Activated CD4-positive, alpha-beta memory T cell treated with anti-CD3 and anti-CD28 coated beads, Interleukin-2, amount 10 ng/mL, durations not matched to agents 7 days and 5 days (primary cell): ENCODE measurements at regions of chr12 and their contacts with region 1.

Region 1: GRCh38 chr12:94101738-94102660 is 46.4 kb upstream of the PLXNC1 start:
- DNase-seq: peak; percentile 91
- H3K4me3 Mint-ChIP-seq: peak overlapping the region; percentile 83
- H3K27ac Mint-ChIP-seq: peak overlapping the region; percentile 80
- H3K4me1 Mint-ChIP-seq: peaks cover 43% of the 10 kb centered on the region
- H3K27me3 Mint-ChIP-seq: peaks cover 12% of the 10 kb centered on the region

Region 2: DNA sequence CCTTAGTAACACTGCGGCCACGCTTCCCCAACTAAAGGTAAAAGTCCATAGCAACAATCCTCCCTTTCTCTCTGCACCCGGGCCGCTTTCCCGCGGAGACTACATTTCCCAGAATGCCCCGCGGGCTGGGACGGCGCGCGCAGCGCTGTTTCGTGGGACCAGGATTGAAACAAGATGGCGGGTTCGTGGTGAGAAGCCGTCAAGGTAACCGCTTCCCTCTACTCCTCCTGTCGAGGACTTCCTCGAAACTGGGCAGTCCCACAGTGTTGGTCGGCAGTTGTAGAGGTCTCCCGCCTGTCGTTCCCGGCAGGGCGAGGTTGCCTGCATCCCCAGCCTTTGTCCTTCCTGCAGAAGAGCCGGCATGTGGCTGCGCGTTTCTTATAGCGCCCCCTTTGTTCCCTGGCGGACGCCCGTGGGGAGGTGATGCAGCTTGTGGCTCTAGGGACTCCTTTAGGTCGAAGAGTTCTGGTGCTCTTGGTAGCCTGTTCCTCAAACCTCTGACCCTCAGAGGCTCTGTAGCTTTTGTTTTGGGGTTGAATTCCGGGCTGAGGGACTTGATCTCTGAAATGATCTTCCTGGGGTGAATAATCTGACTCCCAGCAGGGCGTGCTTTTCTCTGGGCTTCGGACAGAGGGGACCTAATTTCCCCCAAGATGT is 634.5 kb before region 1 on chr12 and contains the start of gene MRPL42:
- CTCF ChIA-PET with region 1: interaction called, 10 read pairs
- POLR2A ChIA-PET with region 1: interaction called, 3 read pairs
- DNase-seq: peak; percentile 94
- H3K4me3 Mint-ChIP-seq: peak within 1 kb of the TSS; percentile 94
- H3K27ac Mint-ChIP-seq: peak within 1 kb of the TSS; percentile 88
- H3K4me1 Mint-ChIP-seq: peaks cover 31% of the 10 kb centered on the region
- H3K27me3 Mint-ChIP-seq: no peaks in the 10 kb centered on the region
- total RNA-seq, gene MRPL42: 57.2 to 58.0 TPM

Region 3: GRCh38 chr12:93677195-93678064 is 424.6 kb before region 1 on chr12 and contains the start of gene CRADD:
- CTCF ChIA-PET with region 1: interaction called, 18 read pairs
- POLR2A ChIA-PET with region 1: interaction called, 22 read pairs
- DNase-seq: peak; percentile 87
- H3K4me3 Mint-ChIP-seq: peak within 1 kb of the TSS; percentile 88
- H3K27ac Mint-ChIP-seq: peak within 1 kb of the TSS; percentile 99
- H3K4me1 Mint-ChIP-seq: peaks cover 40% of the 10 kb centered on the region
- H3K27me3 Mint-ChIP-seq: peaks cover 6% of the 10 kb centered on the region
- total RNA-seq, gene CRADD: 12.7 to 14.1 TPM

Region 4: DNA sequence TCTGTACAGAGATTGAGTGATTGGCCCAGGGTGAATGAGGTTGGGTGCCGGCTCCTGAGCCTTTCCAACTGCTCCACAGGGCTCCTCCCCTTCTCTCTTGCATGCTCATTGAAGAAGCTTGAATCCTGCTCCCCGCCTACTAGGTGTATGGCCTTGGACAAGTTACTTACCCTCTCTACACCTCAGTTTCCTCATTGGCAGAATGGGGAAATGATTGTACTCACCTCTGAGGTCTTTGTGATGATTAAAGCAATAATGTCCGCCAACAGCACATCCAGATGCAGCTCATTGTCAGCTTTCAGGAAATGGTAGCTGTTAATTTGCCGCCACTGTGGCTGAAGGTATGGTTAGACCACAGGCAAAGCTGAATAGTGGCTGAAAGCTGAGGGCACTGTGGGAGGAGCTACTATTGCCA is 250.7 kb before region 1 on chr12:
- CTCF ChIA-PET with region 1: interaction called, 17 read pairs
- POLR2A ChIA-PET with region 1: no interaction called
- DNase-seq: peak; percentile 85
- H3K4me3 Mint-ChIP-seq: peak overlapping the region; percentile 27
- H3K27ac Mint-ChIP-seq: peak overlapping the region; percentile 86
- H3K4me1 Mint-ChIP-seq: peaks cover 85% of the 10 kb centered on the region
- H3K27me3 Mint-ChIP-seq: no peaks in the 10 kb centered on the region

Region 5: GRCh38 chr12:94012590-94012989 is 89.4 kb before region 1 on chr12:
- CTCF ChIA-PET with region 1: interaction called, 17 read pairs
- POLR2A ChIA-PET with region 1: no interaction called
- DNase-seq: no peak
- H3K4me3 Mint-ChIP-seq: no peak overlapping the region
- H3K27ac Mint-ChIP-seq: no peak overlapping the region
- H3K4me1 Mint-ChIP-seq: peaks cover 17% of the 10 kb centered on the region
- H3K27me3 Mint-ChIP-seq: peaks cover 3% of the 10 kb centered on the region

Region 6: DNA sequence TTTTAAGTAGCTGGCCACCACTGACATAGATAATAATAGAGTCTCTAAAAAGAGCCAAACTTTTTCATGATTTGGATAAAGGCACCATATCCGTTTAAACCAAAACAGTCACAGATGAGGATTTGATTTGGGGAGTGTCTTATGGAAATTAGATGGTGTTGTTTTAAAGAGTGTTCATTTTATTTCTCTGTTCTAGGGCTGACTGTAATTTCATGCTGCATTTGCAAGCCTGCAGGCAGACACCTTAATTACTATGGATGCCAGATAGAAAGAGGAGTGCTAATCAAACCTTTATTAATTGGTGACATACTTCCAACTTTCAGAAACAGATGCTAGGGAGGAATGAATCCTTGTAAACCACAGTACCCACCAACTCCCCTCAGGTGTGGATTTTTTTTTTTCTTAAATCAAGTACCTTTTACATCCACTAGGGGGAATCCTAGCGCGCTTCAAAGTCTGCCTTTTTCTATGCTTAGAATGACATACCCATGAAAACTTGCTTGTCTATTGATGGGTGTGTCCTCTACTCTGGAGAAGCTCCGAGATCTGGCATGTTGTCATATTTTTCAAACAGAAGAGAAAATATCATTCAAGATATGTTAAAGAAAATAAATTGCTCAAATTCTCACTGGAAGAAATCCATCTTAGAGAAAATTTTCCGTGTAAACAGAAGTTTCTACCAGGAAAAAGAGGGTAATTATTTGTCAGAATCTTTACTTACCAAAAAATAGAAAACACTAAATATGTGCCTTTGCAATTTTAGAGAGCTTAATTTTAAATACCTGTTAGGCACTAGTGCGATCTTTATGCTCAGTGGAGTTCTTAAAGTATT is 32.2 kb after region 1 on chr12:
- CTCF ChIA-PET with region 1: interaction called, 29 read pairs
- POLR2A ChIA-PET with region 1: no interaction called
- DNase-seq: peak; percentile 35
- H3K4me3 Mint-ChIP-seq: no peak overlapping the region
- H3K27ac Mint-ChIP-seq: no peak overlapping the region
- H3K4me1 Mint-ChIP-seq: peaks cover 9% of the 10 kb centered on the region
- H3K27me3 Mint-ChIP-seq: peaks cover 11% of the 10 kb centered on the region

Region 7: GRCh38 chr12:94157981-94158411 is 56.0 kb after region 1 on chr12:
- CTCF ChIA-PET with region 1: no interaction called
- POLR2A ChIA-PET with region 1: no interaction called
- DNase-seq: no peak
- H3K4me3 Mint-ChIP-seq: no peak overlapping the region
- H3K27ac Mint-ChIP-seq: no peak overlapping the region
- H3K4me1 Mint-ChIP-seq: peaks cover 15% of the 10 kb centered on the region
- H3K27me3 Mint-ChIP-seq: peaks cover 7% of the 10 kb centered on the region